PC-9 (cell line): ENCODE measurements at regions of chr5 and their contacts with region 1.

Region 1: DNA sequence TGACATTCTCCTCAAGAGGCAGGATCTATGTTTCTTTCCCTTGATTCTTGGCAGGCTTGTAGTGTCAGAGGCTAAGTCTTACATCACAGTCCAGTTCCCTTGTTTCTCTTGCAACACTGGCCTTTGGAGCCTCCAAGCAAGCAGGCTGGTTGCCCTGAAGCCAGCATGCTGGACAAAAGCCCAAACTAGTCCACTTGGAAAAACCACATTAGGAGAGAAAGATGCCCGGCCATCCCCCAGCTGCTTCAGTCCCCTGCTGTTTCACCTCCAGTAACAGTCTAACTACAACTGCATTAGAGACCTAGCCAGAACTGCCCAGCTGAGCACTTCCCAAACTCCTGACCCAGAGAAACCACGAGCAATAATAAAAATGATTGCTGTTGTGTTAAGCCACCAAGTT is 87.6 kb downstream of the ADAMTS6 start:
- DNase-seq: no peak
- H3K4me3 ChIP-seq: no peak overlapping the region
- H3K27ac ChIP-seq: no peak overlapping the region
- H3K4me1 ChIP-seq: no peaks in the 10 kb centered on the region
- H3K27me3 ChIP-seq: no peaks in the 10 kb centered on the region
- CTCF ChIP-seq: no peak

Region 2: GRCh38 chr5:65247594-65247993 is 146.5 kb before region 1 on chr5:
- CTCF ChIA-PET with region 1: no interaction called
- POLR2A ChIA-PET with region 1: interaction called, 20 read pairs
- intact Hi-C with region 1: no loop called
- DNase-seq: no peak
- H3K4me3 ChIP-seq: no peak overlapping the region
- H3K27ac ChIP-seq: no peak overlapping the region
- H3K4me1 ChIP-seq: no peaks in the 10 kb centered on the region
- H3K27me3 ChIP-seq: no peaks in the 10 kb centered on the region
- CTCF ChIP-seq: no peak